ENCODE measurements at regions of chr7 and their contacts with region 1.

Region 1: DNA sequence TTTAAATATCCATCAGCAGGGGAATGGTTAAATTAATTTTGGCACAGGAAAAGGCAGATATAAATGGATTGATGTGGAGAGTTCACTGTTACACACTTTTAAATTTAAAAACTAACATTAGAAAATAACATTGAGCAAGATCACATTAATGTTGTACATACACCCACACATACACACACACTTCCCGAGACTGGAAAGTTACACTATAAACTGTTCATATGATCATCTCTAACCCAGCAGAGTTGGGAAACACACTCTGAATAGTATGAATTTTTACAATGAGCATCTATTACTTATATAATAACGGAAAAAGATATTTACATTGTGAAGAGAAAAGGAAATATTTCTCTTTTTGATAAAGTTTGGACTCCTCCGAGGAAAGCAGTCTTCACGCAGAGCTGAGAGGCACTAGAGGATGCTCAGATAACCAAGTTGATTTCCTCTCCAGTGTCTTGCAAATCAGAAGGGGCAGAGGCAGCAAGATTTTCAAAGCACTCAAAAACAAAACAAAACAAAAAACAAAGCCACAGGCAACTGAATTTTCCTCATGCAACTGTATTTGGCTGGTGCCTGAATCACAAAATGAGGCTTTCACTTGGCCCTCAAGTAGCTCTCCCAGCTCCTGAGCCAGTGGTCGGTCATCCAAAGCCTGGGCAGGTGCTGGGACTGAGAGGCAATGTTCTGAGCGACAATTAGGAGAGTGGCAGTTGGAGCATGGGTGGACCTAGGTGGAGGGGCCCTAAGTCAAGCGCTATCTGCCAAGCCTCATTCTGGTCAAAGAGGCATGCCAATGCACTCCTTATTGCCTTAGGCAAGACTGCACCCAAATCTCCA is 10.5 kb upstream of the GATAD1 start:
- DNase-seq: no peak
- H3K4me3 Mint-ChIP-seq: no peak overlapping the region
- H3K27ac Mint-ChIP-seq: no peak overlapping the region
- H3K4me1 Mint-ChIP-seq: no peaks in the 10 kb centered on the region
- H3K27me3 Mint-ChIP-seq: no peaks in the 10 kb centered on the region

Region 2: DNA sequence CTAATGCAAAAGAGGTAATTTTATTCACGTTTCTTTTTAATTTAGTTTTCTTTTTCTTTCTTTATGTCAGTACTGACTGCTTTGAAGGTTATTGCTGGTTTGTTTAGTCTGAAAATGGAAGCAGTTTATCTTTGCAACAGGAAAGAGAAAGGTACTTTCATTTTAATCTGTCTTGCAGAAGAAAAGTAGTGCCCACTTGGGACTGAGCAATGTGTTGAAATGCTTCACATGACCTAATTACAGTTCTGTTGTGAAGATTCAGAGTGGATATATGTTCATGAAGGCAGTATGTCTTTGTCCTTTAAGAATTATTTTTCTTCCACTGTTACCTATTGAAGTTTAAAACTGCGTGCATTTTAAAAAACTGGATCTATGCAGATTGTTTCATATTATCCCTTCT is 111.0 kb before region 1 on chr7:
- CTCF ChIA-PET with region 1: no interaction called
- intact Hi-C with region 1: loop called (anchors 5 kb)
- DNase-seq: no peak
- H3K4me3 Mint-ChIP-seq: no peak overlapping the region
- H3K27ac Mint-ChIP-seq: no peak overlapping the region
- H3K4me1 Mint-ChIP-seq: no peaks in the 10 kb centered on the region
- H3K27me3 Mint-ChIP-seq: no peaks in the 10 kb centered on the region

Measured in activated naive CD4-positive, alpha-beta T cell treated with anti-CD3 and anti-CD28 coated beads for 36 hours (primary cell).